ENCODE measurements at regions of chr7 and their contacts with region 1.

Region 1: GRCh38 chr7:101410743-101411507 is 48.2 kb downstream of the COL26A1 start:
- DNase-seq: peak in 3 of 5 donors; percentile 20 to 31 (median 28)
- ATAC-seq: peak in 3 of 4 donors; percentile 36 to 56 (median 46)
- H3K4me3 ChIP-seq: no peak overlapping the region
- H3K27ac ChIP-seq: no peak overlapping the region
- H3K4me1 ChIP-seq: peaks cover 0 to 5% (median 0%) of the 10 kb centered on the region in 12 donors
- H3K27me3 ChIP-seq: peaks cover 0 to 25% (median under 1%) of the 10 kb centered on the region in 9 donors
- CTCF ChIP-seq: peak; percentile 55 to 85 (median 72)
- POLR2A ChIP-seq: no peak

Region 2: GRCh38 chr7:101321491-101322401 is 89.2 kb before region 1 on chr7 and contains the start of gene IFT22:
- intact Hi-C with region 1: loop called in 1 of 10 experiments (anchors 5 kb)
- DNase-seq: peak; percentile 94 to 96 (median 95)
- ATAC-seq: peak; percentile 92 to 100 (median 98)
- H3K4me3 ChIP-seq: peak within 1 kb of the TSS; percentile 60 to 98 (median 78)
- H3K27ac ChIP-seq: peak within 1 kb of the TSS; percentile 14 to 85 (median 76)
- H3K4me1 ChIP-seq: peaks cover 0 to 16% (median 8%) of the 10 kb centered on the region in 12 donors
- H3K27me3 ChIP-seq: no peaks in the 10 kb centered on the region
- CTCF ChIP-seq: peak in 8 of 12 donors; percentile 18 to 52 (median 40)
- POLR2A ChIP-seq: peak in 1 of 2 donors; percentile 50
- total RNA-seq, gene IFT22: 15.7 to 39.3 (median 30.0) TPM